Activated B cell treated with CpG ODN at 0.5 μM for 24 hours (primary cell): ENCODE measurements at regions of chr15 and their contacts with region 1.

Region 1: DNA sequence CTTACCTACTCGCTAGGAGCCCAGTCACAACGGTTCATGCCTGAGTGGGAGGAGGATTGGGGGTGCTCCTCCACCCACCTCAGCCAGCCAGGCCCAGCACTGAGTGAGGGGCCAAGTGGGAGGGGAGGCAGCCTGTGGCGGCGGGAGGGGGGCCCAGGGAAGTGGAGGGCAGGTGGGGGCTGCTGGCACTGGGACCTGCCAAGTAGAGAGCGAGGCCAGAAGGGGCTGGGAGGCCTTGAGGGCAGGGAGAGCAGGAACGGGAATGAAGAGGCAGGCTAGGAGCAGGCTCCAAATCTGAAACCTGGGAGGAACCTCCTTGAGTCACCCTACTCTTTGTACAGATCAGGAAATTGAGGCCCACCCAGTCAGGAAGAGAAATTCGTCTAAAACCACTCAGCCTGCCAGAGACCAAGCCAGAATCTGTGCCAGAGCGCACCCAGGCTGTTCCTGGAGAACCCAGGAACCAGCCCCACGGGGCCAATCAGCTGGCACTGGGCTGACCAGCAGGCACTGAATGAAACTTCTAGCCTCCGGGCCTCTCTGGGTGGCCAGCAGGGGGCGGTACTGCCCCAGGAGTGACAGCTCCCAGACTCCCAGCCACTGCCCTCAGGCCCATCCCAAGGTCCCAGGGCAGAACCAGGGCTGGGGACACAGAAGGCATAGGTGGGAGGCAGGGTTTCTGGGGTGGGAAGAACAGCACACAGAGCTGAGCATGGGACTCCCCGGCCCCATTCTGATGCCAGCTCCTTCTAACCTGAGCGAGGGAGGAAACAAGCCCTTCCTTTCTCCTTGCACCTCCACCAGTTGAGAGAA is 14.8 kb upstream of the CYP11A1 start:
- DNase-seq: peak; percentile 76
- ATAC-seq: no peak
- H3K4me3 Mint-ChIP-seq: no peak overlapping the region
- H3K27ac Mint-ChIP-seq: peak overlapping the region; percentile 97
- H3K4me1 Mint-ChIP-seq: peaks cover 70% of the 10 kb centered on the region
- H3K27me3 Mint-ChIP-seq: no peaks in the 10 kb centered on the region
- CTCF ChIP-seq: peak; percentile 67

Region 2: GRCh38 chr15:74396445-74397238 is 14.4 kb after region 1 on chr15:
- CTCF ChIA-PET with region 1: interaction called, 67 read pairs
- POLR2A ChIA-PET with region 1: interaction called, 563 read pairs
- intact Hi-C with region 1: loop called (anchors 1 kb)
- DNase-seq: peak; percentile 72
- ATAC-seq: peak; percentile 66
- H3K4me3 Mint-ChIP-seq: peak overlapping the region; percentile 80
- H3K27ac Mint-ChIP-seq: peak overlapping the region; percentile 99
- H3K4me1 Mint-ChIP-seq: peaks cover 100% of the 10 kb centered on the region
- H3K27me3 Mint-ChIP-seq: no peaks in the 10 kb centered on the region
- CTCF ChIP-seq: no peak

Region 3: DNA sequence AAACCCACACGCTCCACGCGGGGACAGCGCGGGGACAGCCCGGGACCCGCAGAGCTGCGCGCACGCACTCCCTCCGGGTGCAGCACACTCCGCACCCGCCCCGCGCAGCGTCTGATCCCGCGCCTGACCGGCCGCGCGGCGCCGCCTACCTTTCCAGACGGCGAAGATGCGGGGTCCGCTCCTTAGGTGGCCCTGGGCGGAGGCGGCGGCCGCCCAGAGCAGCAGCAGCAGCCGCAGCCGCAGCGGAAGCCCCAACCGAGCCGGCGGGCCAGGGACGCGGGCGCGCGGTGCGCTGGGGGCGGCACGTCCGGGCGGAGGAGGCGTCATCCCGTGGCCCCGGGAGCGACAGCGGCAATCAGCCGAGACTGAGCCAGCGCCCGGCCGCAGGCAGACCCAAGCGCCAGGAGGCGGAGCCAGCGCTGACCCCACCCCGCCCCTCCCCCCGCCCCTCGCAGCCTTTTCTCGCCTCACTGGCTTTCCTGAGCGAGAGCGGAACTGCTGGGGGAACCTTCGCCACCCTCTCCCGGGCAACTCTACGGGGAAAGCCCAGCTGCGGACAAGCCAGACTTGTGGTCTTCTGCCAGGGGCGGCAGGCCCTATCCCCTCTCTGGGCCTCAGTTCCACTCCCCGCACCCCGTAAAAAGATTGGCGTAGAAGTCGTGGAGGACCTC is 51.5 kb after region 1 on chr15 and contains the start of gene SEMA7A:
- CTCF ChIA-PET with region 1: interaction called, 403 read pairs
- POLR2A ChIA-PET with region 1: interaction called, 214 read pairs
- intact Hi-C with region 1: loop called (anchors 1 kb)
- DNase-seq: peak; percentile 83
- ATAC-seq: peak; percentile 80
- H3K4me3 Mint-ChIP-seq: peak within 1 kb of the TSS; percentile 96
- H3K27ac Mint-ChIP-seq: peak within 1 kb of the TSS; percentile 90
- H3K4me1 Mint-ChIP-seq: peaks cover 76% of the 10 kb centered on the region
- H3K27me3 Mint-ChIP-seq: no peaks in the 10 kb centered on the region
- CTCF ChIP-seq: no peak
- total RNA-seq, gene SEMA7A: 159 and 178 TPM in 2 replicates

Region 4: DNA sequence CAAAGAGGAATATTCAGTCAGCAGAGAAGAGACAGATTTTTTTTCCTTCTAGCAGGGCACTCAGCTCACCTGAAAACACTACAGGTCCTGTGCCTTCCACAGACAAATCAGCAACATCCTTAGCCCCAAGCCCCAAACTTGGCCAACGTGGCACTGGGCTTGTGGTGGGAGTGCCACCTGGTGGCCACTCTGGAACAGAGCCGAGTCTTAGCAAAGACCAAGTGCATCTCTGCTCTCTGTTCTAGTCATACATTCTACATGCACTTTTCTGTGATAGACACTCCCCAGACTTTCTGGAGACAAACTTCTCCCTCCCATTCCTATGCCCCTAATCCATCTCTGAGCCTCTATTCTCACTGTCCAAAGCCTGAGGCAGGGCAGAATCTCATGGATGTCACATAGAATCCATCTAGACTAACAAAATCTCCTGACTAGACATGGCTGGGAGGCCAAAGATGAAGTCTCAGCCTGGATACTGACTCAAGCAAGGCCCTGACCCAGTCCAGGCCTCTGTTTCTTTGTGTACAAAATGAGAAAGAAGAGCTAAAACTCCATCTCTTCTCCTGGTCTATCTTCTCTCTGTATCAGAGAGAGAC is 56.6 kb after region 1 on chr15:
- CTCF ChIA-PET with region 1: interaction called, 403 read pairs
- POLR2A ChIA-PET with region 1: interaction called, 214 read pairs
- intact Hi-C with region 1: loop called (anchors 1 kb)
- DNase-seq: peak; percentile 67
- ATAC-seq: peak; percentile 53
- H3K4me3 Mint-ChIP-seq: peak overlapping the region; percentile 28
- H3K27ac Mint-ChIP-seq: peak overlapping the region; percentile 73
- H3K4me1 Mint-ChIP-seq: peaks cover 40% of the 10 kb centered on the region
- H3K27me3 Mint-ChIP-seq: no peaks in the 10 kb centered on the region
- CTCF ChIP-seq: peak; percentile 54

Region 5: DNA sequence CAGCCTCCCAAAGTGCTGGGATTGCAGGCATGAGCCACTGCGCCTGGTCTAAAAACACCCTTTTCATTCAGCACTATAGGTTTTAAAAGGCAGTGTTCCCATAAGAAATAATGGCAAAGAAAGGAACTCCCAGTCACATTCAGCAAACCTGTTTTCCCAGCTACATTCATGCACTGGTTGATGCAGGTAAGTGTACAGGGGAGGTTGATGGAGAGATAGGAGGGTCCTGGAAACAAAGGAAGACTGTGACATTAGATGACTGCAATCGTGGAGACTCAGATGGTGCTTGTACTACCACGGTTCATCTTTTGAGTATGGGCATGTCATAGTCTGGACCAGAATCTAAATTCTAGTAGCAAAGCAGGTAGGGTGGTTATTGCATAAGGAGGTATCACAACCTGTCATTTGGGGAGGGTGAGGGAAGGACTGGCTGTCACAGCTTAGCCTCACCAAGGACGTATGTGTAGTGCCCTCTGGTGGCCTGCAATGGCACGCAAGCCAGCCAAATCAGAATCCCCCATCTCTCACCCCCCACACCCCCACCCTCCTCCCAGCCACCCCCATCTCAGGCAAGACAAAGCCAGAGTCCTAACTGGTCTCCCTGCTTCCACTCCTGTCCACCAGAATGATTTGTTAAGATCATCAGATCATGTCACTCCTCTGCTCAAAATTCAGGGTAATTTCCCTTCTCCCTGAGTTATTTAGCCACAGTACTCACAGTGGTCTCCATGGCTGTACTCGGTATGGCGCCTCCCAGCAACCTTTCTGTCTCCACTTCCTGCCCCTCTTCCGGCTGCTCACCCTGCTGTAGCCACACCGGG is 107.5 kb after region 1 on chr15:
- CTCF ChIA-PET with region 1: interaction called, 21 read pairs
- POLR2A ChIA-PET with region 1: interaction called, 4 read pairs
- intact Hi-C with region 1: loop called (anchors 1 kb)
- DNase-seq: peak; percentile 60
- ATAC-seq: peak; percentile 96
- H3K4me3 Mint-ChIP-seq: peak overlapping the region; percentile 51
- H3K27ac Mint-ChIP-seq: peak overlapping the region; percentile 8
- H3K4me1 Mint-ChIP-seq: peaks cover 11% of the 10 kb centered on the region
- H3K27me3 Mint-ChIP-seq: no peaks in the 10 kb centered on the region
- CTCF ChIP-seq: peak; percentile 25